Ascending aorta (tissue), 2 donors: ENCODE measurements at regions of chr1 and their contacts with region 1.

Region 1: GRCh38 chr1:151739590-151740375 is 18.5 kb downstream of the RIIAD1 start:
- DNase-seq: no peak
- H3K4me3 ChIP-seq: no peak overlapping the region
- H3K27ac ChIP-seq: no peak overlapping the region
- H3K4me1 ChIP-seq: no peaks in the 10 kb centered on the region
- H3K27me3 ChIP-seq: no peaks in the 10 kb centered on the region
- CTCF ChIP-seq: no peak

Region 2: DNA sequence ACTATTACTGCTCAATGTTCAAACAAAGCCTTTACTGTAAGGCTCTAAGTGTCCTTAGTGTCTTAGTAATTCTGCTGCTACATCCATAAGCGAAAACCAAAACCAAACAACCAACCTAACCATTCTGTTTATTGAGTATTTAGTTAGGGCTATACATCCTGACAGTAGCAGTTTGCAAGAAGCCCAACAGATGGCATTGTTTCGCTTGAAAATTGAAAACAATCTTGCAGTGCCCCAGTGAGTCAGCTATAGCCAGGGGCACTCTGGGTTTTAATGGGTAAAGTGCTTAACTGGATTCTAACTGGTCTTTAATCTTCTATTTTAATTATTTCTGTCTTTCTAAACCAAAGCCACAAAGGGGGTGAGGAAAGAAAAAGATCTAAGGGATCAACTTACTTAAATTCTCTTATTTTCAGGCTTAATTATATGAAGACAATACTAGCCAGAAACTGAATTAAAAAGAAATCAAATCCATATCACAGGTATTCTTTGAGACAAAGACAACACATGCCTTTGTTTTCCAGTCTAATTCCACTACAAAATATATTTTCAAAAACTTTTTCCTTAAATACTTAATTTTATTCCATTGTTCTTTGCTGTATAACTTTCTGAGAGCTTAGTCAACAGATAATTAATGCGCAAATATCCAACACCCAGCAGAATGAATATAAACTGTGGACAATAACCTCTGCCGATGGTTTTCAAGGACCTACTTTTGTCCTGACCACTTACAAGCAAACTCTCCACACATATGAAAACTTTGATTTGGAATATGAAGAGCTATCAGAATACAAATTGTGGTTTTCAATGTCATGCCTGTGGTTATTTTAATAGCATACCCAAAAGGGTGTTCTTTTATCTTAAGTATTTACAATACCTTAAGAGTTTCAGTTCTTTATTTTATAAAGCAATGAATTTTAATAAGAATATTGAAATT is 295.7 kb before region 1 on chr1:
- intact Hi-C with region 1: loop called (anchors 5 kb)
- DNase-seq: peak in 1 of 2 donors; percentile 78
- H3K4me3 ChIP-seq: peak overlapping the region in 1 of 2 donors; percentile 9
- H3K27ac ChIP-seq: no peak overlapping the region
- H3K4me1 ChIP-seq: peaks cover 0 to 27% of the 10 kb centered on the region in 2 donors
- H3K27me3 ChIP-seq: no peaks in the 10 kb centered on the region
- CTCF ChIP-seq: peak; percentile 69 to 72 (median 69)

Region 3: DNA sequence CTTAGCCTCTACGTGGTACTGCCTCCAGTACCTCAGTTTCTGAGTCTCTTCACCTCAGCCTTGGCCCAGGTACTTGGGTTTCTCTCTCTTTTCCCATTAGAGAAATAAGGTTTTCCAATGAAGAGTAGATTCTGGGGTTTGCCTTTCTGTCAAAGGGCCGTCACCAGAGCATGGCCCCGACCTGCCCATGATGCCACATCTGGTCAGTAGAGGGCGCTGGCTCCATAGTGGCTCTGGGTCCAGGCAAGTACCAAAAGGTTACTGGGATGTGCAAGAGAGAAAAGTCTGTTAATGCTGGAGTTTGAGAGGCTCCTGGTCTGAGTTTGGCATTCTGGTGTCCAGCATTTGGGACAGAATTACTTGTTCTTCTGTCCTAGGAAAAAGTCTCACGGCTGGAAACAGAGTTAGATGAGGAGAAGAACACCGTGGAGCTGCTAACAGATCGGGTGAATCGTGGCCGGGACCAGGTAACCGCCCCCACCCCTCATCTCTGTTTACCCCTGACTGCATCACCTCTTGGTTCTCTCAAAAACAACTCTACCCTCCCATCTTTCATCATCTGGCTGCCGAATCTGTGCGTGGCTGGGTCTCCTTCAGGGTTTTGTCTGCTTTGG is 205.0 kb before region 1 on chr1:
- intact Hi-C with region 1: loop called (anchors 2 kb)
- DNase-seq: peak in 1 of 2 donors; percentile 85
- H3K4me3 ChIP-seq: no peak overlapping the region
- H3K27ac ChIP-seq: no peak overlapping the region
- H3K4me1 ChIP-seq: peaks cover 3 to 4% of the 10 kb centered on the region in 2 donors
- H3K27me3 ChIP-seq: no peaks in the 10 kb centered on the region
- CTCF ChIP-seq: peak; percentile 70 to 90 (median 88)

Region 4: DNA sequence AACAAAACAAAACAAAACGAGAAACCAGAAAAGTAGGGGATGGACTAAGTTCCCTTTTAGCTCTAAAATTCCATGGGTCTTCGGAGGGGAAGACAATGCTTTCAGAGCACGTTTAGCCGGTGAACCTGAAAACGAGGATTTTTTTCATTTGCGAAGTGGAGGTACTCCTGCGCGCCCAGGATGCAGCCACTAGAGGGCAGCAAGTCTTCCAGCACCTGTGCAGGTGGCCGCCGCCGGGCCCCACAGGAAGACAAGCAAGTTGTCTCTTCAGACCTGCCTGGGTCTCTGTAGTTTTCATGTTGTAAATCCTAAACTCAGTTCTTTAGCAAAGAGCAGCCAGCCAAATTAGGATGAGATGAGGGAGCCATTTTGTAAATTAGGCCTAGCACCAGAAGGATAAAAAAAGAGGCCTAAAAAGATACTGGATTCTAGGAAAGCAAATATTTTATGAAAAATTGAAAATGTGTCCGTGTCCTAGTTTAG is 145.6 kb before region 1 on chr1:
- intact Hi-C with region 1: loop called (anchors 1 kb)
- DNase-seq: peak in 1 of 2 donors; percentile 80
- H3K4me3 ChIP-seq: no peak overlapping the region
- H3K27ac ChIP-seq: no peak overlapping the region
- H3K4me1 ChIP-seq: no peaks in the 10 kb centered on the region
- H3K27me3 ChIP-seq: no peaks in the 10 kb centered on the region
- CTCF ChIP-seq: peak; percentile 80 to 92 (median 90)

Region 5: DNA sequence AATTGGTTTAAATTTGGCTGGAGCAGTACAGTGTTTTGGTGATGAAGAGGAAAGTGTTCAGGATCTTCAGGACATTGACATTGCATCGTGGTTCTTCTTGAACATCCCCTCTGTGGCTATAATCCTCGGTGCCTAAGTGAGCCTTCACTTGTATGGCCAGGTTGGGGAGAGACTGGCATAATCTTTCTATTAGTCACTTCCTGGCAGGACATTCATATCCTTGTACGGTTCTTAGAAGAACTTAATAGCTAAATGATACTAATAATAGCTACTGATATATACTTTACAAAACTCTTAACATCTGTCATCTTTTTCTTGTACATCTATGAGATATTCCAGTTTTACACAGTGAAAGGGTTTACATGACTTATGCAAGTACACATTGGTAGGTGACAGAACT is 59.0 kb before region 1 on chr1:
- intact Hi-C with region 1: no loop called
- DNase-seq: no peak
- H3K4me3 ChIP-seq: peak overlapping the region in 1 of 2 donors; percentile 9
- H3K27ac ChIP-seq: peak overlapping the region; percentile 58 to 71
- H3K4me1 ChIP-seq: peaks cover 0 to 5% of the 10 kb centered on the region in 2 donors
- H3K27me3 ChIP-seq: no peaks in the 10 kb centered on the region
- CTCF ChIP-seq: no peak